ENCODE measurements at regions of chr17 and their contacts with region 1.

Region 1: DNA sequence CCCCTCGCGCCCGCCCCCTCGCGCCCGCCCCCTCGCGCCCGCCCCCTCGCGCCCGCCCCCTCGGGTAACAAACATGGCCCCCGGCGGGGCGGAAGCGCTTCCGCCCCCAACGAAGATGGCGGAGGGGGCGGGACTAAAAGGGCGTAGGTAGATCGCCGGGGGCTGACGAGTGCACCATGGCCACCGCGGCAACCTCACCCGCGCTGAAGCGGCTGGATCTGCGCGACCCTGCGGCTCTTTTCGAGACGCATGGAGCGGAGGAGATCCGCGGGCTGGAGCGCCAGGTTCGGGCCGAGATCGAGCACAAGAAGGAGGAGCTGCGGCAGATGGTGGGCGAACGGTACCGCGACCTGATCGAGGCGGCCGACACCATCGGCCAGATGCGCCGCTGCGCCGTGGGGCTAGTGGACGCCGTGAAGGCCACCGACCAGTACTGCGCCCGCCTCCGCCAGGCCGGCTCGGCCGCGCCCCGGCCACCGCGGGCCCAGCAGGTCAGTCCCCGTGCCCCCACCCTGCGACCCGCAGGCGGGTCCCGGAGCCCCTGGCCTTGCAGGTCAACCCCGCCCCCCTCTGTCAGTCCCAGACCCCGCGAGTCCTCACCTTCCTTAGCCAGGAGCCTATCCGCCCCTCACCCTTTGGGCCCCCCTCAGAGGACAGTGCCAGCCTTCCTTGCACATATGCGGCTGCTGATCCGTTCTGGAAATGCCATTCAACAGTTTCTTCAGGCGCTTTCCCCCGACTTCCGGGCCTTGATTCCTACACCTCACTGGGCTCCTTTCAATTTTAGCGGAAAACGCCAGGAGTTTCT is at the start of gene COG1:
- DNase-seq: peak; percentile 86
- H3K4me3 ChIP-seq: peak within 1 kb of the TSS; percentile 78 to 94 (median 78)
- H3K27ac ChIP-seq: peak within 1 kb of the TSS; percentile 56
- H3K4me1 ChIP-seq: peaks cover 14% of the 10 kb centered on the region
- H3K27me3 ChIP-seq: no peaks in the 10 kb centered on the region
- CTCF ChIP-seq: no peak
- POLR2A ChIP-seq: peak; percentile 77
- total RNA-seq, gene COG1: 38.6 and 39.0 TPM in 2 replicates

Region 2: DNA sequence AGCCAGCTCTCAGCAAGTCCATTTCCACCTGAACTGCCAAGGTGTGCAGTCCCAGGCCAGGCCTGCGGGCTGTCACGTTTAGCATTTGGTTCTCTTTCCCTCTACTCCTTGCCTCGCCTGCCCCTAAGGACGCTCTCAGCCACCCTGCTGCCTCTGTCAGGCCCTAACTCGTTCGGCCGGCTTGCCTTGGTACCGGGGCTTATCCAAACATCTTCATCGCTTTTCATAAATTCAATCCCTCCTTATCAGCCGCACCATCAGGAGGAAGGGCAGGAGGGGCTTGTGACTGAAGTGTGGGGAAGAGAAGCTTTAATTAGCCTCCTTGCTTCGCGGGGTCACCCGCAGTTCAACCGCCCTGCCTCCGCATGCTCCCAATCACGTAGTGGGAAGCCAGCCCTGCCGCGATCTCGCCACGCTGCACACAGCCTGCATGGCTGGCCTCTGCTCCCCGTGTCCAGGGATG is 841.2 kb before region 1 on chr17:
- CTCF ChIA-PET with region 1: no interaction called
- POLR2A ChIA-PET with region 1: no interaction called
- dilution Hi-C with region 1: no loop called
- intact Hi-C with region 1: no loop called
- DNase-seq: no peak
- H3K4me3 ChIP-seq: no peak overlapping the region
- H3K27ac ChIP-seq: no peak overlapping the region
- H3K4me1 ChIP-seq: no peaks in the 10 kb centered on the region
- H3K27me3 ChIP-seq: peaks cover 0 to 2% of the 10 kb centered on the region in 2 experiments
- CTCF ChIP-seq: no peak
- POLR2A ChIP-seq: no peak

Region 3: GRCh38 chr17:73203135-73203787 is 10.2 kb after region 1 on chr17:
- CTCF ChIA-PET with region 1: interaction called, 11 read pairs
- POLR2A ChIA-PET with region 1: no interaction called
- dilution Hi-C with region 1: no loop called
- intact Hi-C with region 1: loop called (anchors 1 kb)
- DNase-seq: peak; percentile 90
- H3K4me3 ChIP-seq: no peak overlapping the region
- H3K27ac ChIP-seq: peak overlapping the region; percentile 81
- H3K4me1 ChIP-seq: peaks cover 24% of the 10 kb centered on the region
- H3K27me3 ChIP-seq: no peaks in the 10 kb centered on the region
- CTCF ChIP-seq: no peak
- POLR2A ChIP-seq: no peak

Region 4: DNA sequence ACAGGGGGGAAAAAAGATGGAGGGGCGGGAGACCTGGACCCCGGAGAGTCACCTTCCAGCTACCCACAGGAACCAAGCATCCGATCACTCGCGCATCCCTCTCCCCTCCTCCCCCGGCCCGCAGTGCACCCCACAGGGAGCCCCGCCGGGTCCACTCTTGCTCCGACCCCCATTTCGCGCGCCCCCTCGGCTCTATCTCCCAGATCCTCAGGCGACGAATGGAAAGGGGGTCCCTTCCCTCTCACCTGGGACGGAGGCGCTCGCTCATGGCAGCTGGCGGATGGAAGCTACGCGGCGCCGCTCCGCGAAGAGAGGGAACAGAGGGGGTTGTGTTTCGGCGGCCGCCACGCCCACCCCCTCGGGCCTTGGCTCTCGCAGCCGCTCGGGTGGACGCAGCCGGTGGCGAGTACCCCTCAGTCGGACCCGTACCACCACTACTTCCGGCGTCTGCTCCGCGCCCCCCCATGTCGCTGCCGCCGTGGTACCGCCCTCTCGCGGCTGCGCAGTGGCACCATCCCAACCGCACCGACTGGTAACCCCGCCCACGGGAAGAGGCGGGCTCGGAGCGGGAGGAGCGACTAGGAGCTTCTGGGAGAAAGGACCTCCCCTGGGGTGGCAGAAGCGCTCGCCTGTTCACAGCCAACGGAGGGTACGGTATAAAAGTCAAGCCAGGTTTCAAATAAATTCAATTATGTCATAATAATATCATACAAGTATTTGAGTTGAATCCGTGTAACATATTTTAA is 38.9 kb after region 1 on chr17:
- CTCF ChIA-PET with region 1: interaction called, 34 read pairs
- POLR2A ChIA-PET with region 1: interaction called, 3 read pairs
- dilution Hi-C with region 1: no loop called
- intact Hi-C with region 1: loop called (anchors 1 kb)
- DNase-seq: peak; percentile 96
- H3K4me3 ChIP-seq: peak overlapping the region; percentile 83 to 93 (median 84)
- H3K27ac ChIP-seq: peak overlapping the region; percentile 83
- H3K4me1 ChIP-seq: peaks cover 38% of the 10 kb centered on the region
- H3K27me3 ChIP-seq: no peaks in the 10 kb centered on the region
- CTCF ChIP-seq: no peak
- POLR2A ChIP-seq: peak; percentile 29

Region 5: DNA sequence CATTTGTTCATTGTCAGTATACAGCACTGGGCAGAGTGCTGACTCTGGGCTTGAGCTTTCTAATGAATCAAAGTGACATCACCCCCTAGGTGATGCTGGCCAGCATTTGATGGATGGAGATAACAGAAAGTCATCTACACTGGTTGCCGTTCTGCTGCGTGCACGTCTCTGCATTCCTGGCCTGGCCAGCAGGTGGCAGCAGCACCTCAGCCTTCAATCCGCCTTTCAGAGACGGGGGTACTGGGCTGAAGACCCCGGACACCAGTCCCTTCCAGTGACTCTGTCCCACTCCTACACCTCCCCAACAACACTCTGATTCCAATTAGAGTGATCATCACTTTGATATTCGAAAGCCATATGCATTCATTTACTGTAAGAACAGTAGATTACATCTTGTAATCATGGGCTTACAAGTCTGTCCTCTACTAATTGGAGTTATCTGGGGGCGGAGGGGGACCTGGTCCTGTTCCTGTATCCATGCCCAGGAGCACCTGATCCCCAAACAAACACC is 62.6 kb after region 1 on chr17:
- CTCF ChIA-PET with region 1: interaction called, 7 read pairs
- POLR2A ChIA-PET with region 1: no interaction called
- dilution Hi-C with region 1: no loop called
- intact Hi-C with region 1: loop called (anchors 2 kb)
- DNase-seq: peak; percentile 53
- H3K4me3 ChIP-seq: no peak overlapping the region
- H3K27ac ChIP-seq: no peak overlapping the region
- H3K4me1 ChIP-seq: no peaks in the 10 kb centered on the region
- H3K27me3 ChIP-seq: no peaks in the 10 kb centered on the region
- CTCF ChIP-seq: peak; percentile 82 to 96
- POLR2A ChIP-seq: no peak

Region 6: DNA sequence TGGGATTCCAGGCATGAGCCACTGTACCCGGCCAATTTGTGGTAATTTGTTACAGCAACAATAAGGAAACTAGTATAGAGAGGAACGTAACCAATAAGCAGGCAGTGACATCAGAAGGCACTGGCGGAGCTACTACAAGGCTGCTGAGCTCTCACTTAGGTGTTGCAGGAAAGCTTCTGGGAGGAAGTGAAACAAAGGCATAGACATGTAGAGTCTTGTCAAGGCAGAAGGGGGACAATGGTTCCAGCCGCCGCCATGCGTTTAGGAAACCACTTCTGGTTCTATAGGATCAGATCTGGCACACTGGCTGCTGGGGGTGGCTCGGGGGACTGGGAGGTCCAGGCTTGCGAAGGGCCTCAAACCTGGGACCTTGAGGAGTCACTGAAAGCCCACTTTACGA is 78.0 kb after region 1 on chr17:
- CTCF ChIA-PET with region 1: no interaction called
- POLR2A ChIA-PET with region 1: no interaction called
- dilution Hi-C with region 1: no loop called
- intact Hi-C with region 1: no loop called
- DNase-seq: no peak
- H3K4me3 ChIP-seq: no peak overlapping the region
- H3K27ac ChIP-seq: no peak overlapping the region
- H3K4me1 ChIP-seq: no peaks in the 10 kb centered on the region
- H3K27me3 ChIP-seq: no peaks in the 10 kb centered on the region
- CTCF ChIP-seq: no peak
- POLR2A ChIP-seq: no peak

Region 7: GRCh38 chr17:73731733-73732132 is 538.6 kb after region 1 on chr17:
- CTCF ChIA-PET with region 1: no interaction called
- POLR2A ChIA-PET with region 1: no interaction called
- dilution Hi-C with region 1: no loop called
- intact Hi-C with region 1: no loop called
- DNase-seq: no peak
- H3K4me3 ChIP-seq: no peak overlapping the region
- H3K27ac ChIP-seq: no peak overlapping the region
- H3K4me1 ChIP-seq: no peaks in the 10 kb centered on the region
- H3K27me3 ChIP-seq: no peaks in the 10 kb centered on the region
- CTCF ChIP-seq: no peak
- POLR2A ChIP-seq: no peak

Region 8: GRCh38 chr17:74203439-74204240 is 1010.5 kb after region 1 on chr17 and contains the start of gene RPL38:
- CTCF ChIA-PET with region 1: no interaction called
- POLR2A ChIA-PET with region 1: no interaction called
- dilution Hi-C with region 1: no loop called
- intact Hi-C with region 1: loop called (anchors 5 kb)
- DNase-seq: peak; percentile 97
- H3K4me3 ChIP-seq: peak within 1 kb of the TSS; percentile 72 to 87 (median 78)
- H3K27ac ChIP-seq: peak within 1 kb of the TSS; percentile 74
- H3K4me1 ChIP-seq: peaks cover 22% of the 10 kb centered on the region
- H3K27me3 ChIP-seq: peaks cover 8 to 14% of the 10 kb centered on the region in 2 experiments
- CTCF ChIP-seq: peak; percentile 97 to 99
- POLR2A ChIP-seq: peak; percentile 98
- total RNA-seq, gene RPL38: 1,006 and 1,060 TPM in 2 replicates